ENCODE measurements at regions of chr10 and their contacts with region 1.

Region 1: DNA sequence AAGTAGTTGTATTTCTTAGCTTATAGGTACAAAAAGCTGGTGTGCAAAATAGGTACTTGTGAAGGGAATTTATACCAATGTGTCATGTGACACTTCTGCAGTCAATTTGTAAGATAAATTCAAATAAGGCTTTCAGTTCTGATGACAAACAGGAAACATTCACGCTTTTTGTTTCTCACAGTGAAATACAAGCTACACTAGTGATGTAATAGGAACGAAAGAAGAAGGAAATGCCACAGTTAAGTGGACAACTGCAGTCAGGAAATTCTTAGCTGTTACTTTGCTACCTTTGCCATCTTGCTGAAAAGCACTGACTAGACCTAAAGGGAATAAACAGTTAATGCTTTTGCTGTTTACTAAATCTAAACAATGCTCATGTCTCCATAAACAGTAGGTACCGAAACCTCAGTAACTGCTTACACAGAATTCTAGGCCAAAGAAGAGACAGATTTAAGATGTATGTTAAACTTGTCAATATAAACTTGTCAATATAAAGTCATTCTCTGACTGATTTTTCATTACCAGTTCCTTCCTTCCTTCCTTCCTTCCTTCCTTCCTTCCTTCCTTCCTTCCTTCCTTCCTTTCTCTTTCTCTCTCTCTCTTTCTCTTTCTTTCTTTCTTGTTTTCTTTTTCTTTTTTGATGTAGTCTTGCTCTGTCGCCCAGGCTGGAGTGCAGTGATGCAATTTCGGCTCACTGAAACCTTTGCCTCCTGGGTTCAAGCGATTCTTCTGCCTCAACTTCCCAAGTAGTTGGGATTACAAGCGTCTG is 10.1 kb downstream of the OTUD1 start:
- DNase-seq: no peak
- H3K4me3 ChIP-seq: no peak overlapping the region
- H3K27ac ChIP-seq: 0 out of 2 replicates have a peak overlapping the region, but pooled peaks have one; percentile 9
- H3K4me1 ChIP-seq: peaks cover 6% of the 10 kb centered on the region; the same call in 1 of the 2 replicates
- H3K27me3 ChIP-seq: no peaks in the 10 kb centered on the region
- CTCF ChIP-seq: no peak

Region 2: DNA sequence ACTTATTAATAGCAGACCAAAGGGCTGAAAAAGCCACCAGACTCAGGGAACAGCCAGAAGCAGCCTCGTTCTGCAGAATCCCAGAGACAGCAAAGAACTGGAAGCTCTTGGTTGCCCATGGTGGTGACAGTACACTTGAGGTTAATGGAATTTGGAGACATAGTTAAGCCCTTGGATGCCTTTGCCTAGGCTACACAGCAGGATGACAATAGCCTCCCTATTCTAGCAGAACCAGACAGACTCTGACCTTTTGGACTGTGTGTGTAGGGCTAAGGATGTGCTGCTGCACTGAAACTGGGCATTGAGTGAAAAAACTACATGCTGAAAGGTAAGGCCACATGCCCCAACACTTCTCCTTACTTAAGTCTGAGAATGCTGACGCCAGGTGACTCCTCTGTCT is 12.6 kb after region 1 on chr10:
- CTCF ChIA-PET with region 1: no interaction called
- POLR2A ChIA-PET with region 1: interaction called, 18 read pairs
- intact Hi-C with region 1: no loop called
- DNase-seq: no peak
- H3K4me3 ChIP-seq: no peak overlapping the region
- H3K27ac ChIP-seq: no peak overlapping the region
- H3K4me1 ChIP-seq: no peaks in the 10 kb centered on the region
- H3K27me3 ChIP-seq: no peaks in the 10 kb centered on the region
- CTCF ChIP-seq: no peak

Measured in PC-9 (cell line).